CD4-positive, alpha-beta T cell (primary cell): ENCODE measurements at regions of chr22 and their contacts with region 1.

Region 1: GRCh38 chr22:40533712-40534378 is 102.7 kb downstream of the MRTFA start:
- DNase-seq: peak; percentile 21 to 90 (median 47)
- ATAC-seq: peak; percentile 98
- H3K4me3 ChIP-seq: peak overlapping the region; percentile 54
- H3K4me3 Mint-ChIP-seq: peak overlapping the region; percentile 84
- H3K27ac ChIP-seq: peak overlapping the region; percentile 44 to 49
- H3K27ac Mint-ChIP-seq: peak overlapping the region; percentile 88
- H3K4me1 ChIP-seq: peaks cover 31% of the 10 kb centered on the region
- H3K4me1 Mint-ChIP-seq: peaks cover 71% of the 10 kb centered on the region
- H3K27me3 ChIP-seq: no peaks in the 10 kb centered on the region
- H3K27me3 Mint-ChIP-seq: no peaks in the 10 kb centered on the region
- CTCF ChIP-seq: no peak

Region 2: GRCh38 chr22:40363059-40363458 is 170.8 kb before region 1 on chr22:
- CTCF ChIA-PET with region 1: no interaction called
- POLR2A ChIA-PET with region 1: no interaction called
- intact Hi-C with region 1: no loop called
- DNase-seq: no peak
- ATAC-seq: no peak
- H3K4me3 ChIP-seq: no peak overlapping the region
- H3K4me3 Mint-ChIP-seq: no peak overlapping the region
- H3K27ac ChIP-seq: no peak overlapping the region
- H3K27ac Mint-ChIP-seq: peak overlapping the region; percentile 65
- H3K4me1 ChIP-seq: no peaks in the 10 kb centered on the region
- H3K4me1 Mint-ChIP-seq: no peaks in the 10 kb centered on the region
- H3K27me3 ChIP-seq: no peaks in the 10 kb centered on the region
- H3K27me3 Mint-ChIP-seq: no peaks in the 10 kb centered on the region
- CTCF ChIP-seq: no peak

Region 3: GRCh38 chr22:40519284-40519947 is 14.4 kb before region 1 on chr22:
- CTCF ChIA-PET with region 1: interaction called, 18 read pairs
- POLR2A ChIA-PET with region 1: interaction called, 14 read pairs
- intact Hi-C with region 1: no loop called
- DNase-seq: peak in 3 of 14 experiments; percentile 68 to 81 (median 68)
- ATAC-seq: peak; percentile 96
- H3K4me3 ChIP-seq: peak overlapping the region; percentile 51
- H3K4me3 Mint-ChIP-seq: peak overlapping the region; percentile 88
- H3K27ac ChIP-seq: peak overlapping the region; percentile 49 to 77
- H3K27ac Mint-ChIP-seq: peak overlapping the region; percentile 94
- H3K4me1 ChIP-seq: peaks cover 23% of the 10 kb centered on the region
- H3K4me1 Mint-ChIP-seq: peaks cover 53% of the 10 kb centered on the region
- H3K27me3 ChIP-seq: no peaks in the 10 kb centered on the region
- H3K27me3 Mint-ChIP-seq: no peaks in the 10 kb centered on the region
- CTCF ChIP-seq: no peak

Region 4: GRCh38 chr22:40620464-40621046 is 86.7 kb after region 1 on chr22:
- CTCF ChIA-PET with region 1: no interaction called
- POLR2A ChIA-PET with region 1: no interaction called
- intact Hi-C with region 1: no loop called
- DNase-seq: no peak
- ATAC-seq: no peak
- H3K4me3 ChIP-seq: no peak overlapping the region
- H3K4me3 Mint-ChIP-seq: no peak overlapping the region
- H3K27ac ChIP-seq: no peak overlapping the region
- H3K27ac Mint-ChIP-seq: no peak overlapping the region
- H3K4me1 ChIP-seq: no peaks in the 10 kb centered on the region
- H3K4me1 Mint-ChIP-seq: peaks cover 38% of the 10 kb centered on the region
- H3K27me3 ChIP-seq: no peaks in the 10 kb centered on the region
- H3K27me3 Mint-ChIP-seq: no peaks in the 10 kb centered on the region
- CTCF ChIP-seq: no peak

Region 5: DNA sequence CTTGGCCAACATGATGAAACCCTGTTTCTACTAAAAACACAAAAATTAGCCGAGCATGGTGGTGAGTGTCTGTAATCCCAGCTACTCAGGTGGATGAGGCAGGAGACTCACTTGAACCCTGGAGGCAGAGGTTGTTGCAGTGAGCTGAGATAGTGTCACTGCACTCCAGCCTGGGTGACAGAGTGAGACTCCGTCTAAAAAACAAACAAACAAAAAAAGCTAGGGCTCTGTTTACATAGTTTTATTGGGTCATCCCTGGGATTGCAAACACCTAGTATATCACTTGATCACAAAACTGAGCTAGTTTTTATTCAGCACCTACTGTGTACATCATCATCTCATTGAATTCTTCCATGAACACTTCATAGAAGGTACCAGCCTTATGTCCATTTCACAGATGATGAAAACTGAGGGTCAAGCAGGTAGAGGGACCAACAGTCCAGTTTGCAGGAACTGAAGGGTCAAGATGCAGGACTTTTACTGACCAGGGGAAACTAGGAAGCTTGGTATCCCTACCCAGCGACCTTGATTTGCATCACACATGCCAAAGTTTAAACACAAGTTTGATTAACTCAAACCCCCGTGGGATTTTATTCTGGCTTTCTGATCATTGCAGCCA is 111.8 kb after region 1 on chr22:
- CTCF ChIA-PET with region 1: interaction called, 20 read pairs
- POLR2A ChIA-PET with region 1: interaction called, 6 read pairs
- intact Hi-C with region 1: loop called in 1 of 2 experiments (anchors 2 kb)
- DNase-seq: no peak
- ATAC-seq: no peak
- H3K4me3 ChIP-seq: no peak overlapping the region
- H3K4me3 Mint-ChIP-seq: no peak overlapping the region
- H3K27ac ChIP-seq: no peak overlapping the region
- H3K27ac Mint-ChIP-seq: no peak overlapping the region
- H3K4me1 ChIP-seq: peaks cover 15% of the 10 kb centered on the region
- H3K4me1 Mint-ChIP-seq: peaks cover 16% of the 10 kb centered on the region
- H3K27me3 ChIP-seq: no peaks in the 10 kb centered on the region
- H3K27me3 Mint-ChIP-seq: no peaks in the 10 kb centered on the region
- CTCF ChIP-seq: no peak